Ascending aorta (tissue), 2 donors: ENCODE measurements at regions of chr3 and their contacts with region 1.

Region 1: DNA sequence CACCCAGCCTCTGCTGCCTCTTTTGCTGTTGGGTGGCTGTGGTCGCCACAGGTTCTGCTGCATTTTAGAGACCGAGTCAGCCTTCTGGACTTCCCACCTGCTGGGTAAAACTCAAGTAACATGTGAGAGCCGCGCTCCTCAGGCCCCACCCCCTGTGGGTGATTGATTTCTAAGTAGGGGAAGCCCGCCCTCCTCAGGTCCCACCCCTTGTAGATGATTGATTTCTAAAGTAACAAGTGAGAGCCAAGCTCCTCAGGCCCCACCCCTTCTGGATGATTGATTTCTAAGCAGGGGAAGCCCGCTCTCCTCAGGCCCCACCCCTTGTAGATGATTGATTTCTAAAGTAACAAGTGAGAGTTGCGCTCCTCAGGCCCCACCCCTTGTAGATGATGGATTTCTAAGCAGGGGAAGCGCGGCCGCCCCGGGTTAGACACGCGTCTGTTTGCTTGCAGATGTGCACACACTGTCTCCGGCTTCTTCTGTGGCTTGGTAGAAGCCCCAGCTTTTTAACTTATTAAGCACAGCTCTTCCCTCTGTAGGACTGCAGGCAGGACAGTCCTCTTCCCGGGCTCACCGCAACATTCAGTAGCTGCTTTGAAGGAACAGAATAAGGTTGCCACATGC is 83.4 kb downstream of the FAM43A start:
- DNase-seq: peak; percentile 85 to 95
- H3K4me3 ChIP-seq: peak overlapping the region; percentile 36 to 62
- H3K27ac ChIP-seq: no peak overlapping the region
- H3K4me1 ChIP-seq: peaks cover 0 to 9% of the 10 kb centered on the region in 2 donors
- H3K27me3 ChIP-seq: no peaks in the 10 kb centered on the region
- CTCF ChIP-seq: no peak

Region 2: GRCh38 chr3:194738254-194739093 is 30.7 kb before region 1 on chr3:
- intact Hi-C with region 1: loop called (anchors 2 kb)
- DNase-seq: peak; percentile 37 to 88
- H3K4me3 ChIP-seq: no peak overlapping the region
- H3K27ac ChIP-seq: peak overlapping the region in 1 of 2 donors; percentile 13
- H3K4me1 ChIP-seq: peaks cover 3 to 21% of the 10 kb centered on the region in 2 donors
- H3K27me3 ChIP-seq: no peaks in the 10 kb centered on the region
- CTCF ChIP-seq: no peak

Region 3: DNA sequence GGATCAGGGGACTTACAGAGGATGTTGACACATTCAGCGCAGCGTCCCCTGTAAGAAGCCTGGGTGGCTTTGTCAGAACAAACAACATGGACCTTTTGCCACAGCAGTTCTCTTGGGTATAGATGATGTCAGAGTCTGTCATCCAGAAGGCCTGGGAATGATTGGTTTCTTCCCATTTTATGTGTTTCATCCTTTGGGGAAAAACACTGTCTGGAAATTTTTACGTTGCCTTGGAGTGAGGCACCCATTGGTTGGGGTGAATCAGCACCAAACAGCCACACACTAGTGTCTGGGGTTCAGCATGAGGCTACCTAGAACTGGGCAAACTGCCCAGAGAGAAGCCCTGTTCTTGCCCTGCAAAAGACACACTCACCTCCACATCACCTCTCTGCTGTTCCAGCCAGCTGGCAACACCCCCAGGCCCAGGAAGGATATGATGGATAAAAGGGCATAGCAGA is 39.5 kb after region 1 on chr3:
- intact Hi-C with region 1: no loop called
- DNase-seq: no peak
- H3K4me3 ChIP-seq: no peak overlapping the region
- H3K27ac ChIP-seq: no peak overlapping the region
- H3K4me1 ChIP-seq: no peaks in the 10 kb centered on the region
- H3K27me3 ChIP-seq: no peaks in the 10 kb centered on the region
- CTCF ChIP-seq: no peak

Region 4: GRCh38 chr3:194906229-194906629 is 137.1 kb after region 1 on chr3:
- intact Hi-C with region 1: no loop called
- DNase-seq: no peak
- H3K4me3 ChIP-seq: no peak overlapping the region
- H3K27ac ChIP-seq: no peak overlapping the region
- H3K4me1 ChIP-seq: no peaks in the 10 kb centered on the region
- H3K27me3 ChIP-seq: no peaks in the 10 kb centered on the region
- CTCF ChIP-seq: no peak

Region 5: DNA sequence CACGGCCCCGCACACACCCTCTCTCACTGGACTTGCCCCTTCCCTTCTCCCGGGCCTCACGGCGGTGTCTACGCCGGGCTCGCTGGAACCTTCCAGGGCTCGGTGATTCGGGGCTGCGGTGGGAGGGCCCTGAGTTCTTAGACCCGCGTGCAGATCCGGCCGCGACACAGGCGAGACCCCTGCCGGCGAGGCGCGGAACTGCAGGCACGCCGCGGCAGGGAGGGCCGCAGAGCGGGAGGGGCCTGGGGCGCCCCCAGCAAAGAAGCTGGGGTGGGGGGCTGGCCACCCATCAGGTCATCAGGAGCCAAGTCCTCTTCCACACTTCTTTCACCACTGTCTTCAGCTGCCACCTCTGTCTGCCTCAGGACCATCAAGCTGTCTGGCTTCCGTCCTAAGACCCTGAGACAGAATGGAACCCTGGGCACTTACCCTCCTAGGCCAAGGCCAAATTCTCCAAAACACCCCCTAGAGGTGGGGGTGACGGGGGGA is 337.3 kb after region 1 on chr3:
- intact Hi-C with region 1: loop called (anchors 5 kb)
- DNase-seq: peak in 1 of 2 donors; percentile 80
- H3K4me3 ChIP-seq: peak overlapping the region in 1 of 2 donors; percentile 40
- H3K27ac ChIP-seq: no peak overlapping the region
- H3K4me1 ChIP-seq: peaks cover 0 to 5% of the 10 kb centered on the region in 2 donors
- H3K27me3 ChIP-seq: no peaks in the 10 kb centered on the region
- CTCF ChIP-seq: peak; percentile 96 to 100 (median 100)